Dorsolateral prefrontal cortex (tissue), 120 donors: ENCODE measurements at regions of chr10 and their contacts with region 1.

Region 1: DNA sequence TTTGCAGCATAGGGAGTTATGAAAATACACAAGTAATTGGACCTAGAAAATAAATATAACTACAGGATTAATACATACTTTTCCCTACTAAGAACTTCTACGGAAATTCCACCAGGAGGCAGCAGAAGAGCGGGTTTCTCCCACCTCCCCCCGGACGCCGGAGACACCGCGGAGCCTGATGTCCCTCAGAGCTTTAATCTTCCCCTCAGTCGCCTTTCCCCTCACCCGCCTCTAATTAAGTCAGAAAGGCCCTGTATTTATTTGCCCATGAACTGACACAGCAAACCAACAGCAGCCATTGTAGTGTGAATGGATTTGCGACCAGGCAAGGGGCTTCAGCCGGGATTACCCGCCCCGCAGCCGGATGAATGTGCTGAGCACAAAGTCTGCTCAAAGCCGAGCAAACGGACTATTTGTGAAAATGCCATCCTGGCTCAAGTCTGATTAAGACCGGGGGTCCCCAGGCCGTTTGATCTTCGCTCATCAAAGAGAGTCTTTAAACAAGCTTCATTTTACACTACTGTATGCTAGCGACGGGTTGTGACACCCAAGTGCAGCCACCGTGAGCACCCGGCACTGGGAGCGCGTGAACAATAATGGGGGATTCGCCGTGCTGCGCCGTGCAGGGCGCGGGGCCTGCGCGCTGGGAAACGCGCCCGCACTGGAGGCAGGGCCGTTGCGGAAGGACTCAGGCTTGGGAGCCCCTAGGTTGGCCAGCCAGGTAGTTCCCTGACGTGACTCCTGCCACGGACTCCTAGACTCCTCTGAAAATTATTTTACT is 5.6 kb upstream of the DKK1 start:
- DNase-seq: peak; percentile 23 to 69 (median 55)
- H3K4me3 ChIP-seq: peak overlapping the region; percentile 34 to 87 (median 63)
- H3K27ac ChIP-seq: peak overlapping the region in 8 of 59 donors; percentile 6 to 79 (median 24)
- H3K27me3 ChIP-seq: peaks cover 0 to 12% (median 0%) of the 10 kb centered on the region in 45 donors
- CTCF ChIP-seq: peak; percentile 65 to 91 (median 80)

Region 2: DNA sequence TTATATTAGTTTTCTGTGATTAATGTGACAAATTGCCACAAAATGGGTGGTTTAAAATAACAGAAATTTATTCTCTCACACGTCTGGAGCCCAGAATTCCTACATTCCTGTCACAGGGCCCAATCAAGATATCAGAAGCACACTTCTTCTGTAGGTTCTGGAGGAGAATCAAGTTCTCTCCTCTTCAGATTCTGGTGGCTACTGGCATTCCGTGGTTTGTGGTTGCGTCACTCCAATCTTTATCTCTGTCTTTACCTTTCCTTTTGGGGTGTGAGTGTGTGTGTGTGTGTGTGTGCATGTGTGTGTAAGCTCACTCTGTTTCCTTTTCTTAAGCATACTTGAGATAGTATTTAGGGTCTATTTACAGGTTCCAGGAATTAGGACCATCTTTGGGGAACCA is 109.9 kb before region 1 on chr10:
- intact Hi-C with region 1: no loop called
- DNase-seq: no peak
- H3K4me3 ChIP-seq: no peak overlapping the region
- H3K27ac ChIP-seq: no peak overlapping the region
- H3K27me3 ChIP-seq: no peaks in the 10 kb centered on the region
- CTCF ChIP-seq: no peak

Region 3: GRCh38 chr10:52488606-52489485 is 180.4 kb after region 1 on chr10:
- intact Hi-C with region 1: loop called (anchors 2 to 5 kb)
- DNase-seq: no peak
- H3K4me3 ChIP-seq: no peak overlapping the region
- H3K27ac ChIP-seq: no peak overlapping the region
- H3K27me3 ChIP-seq: no peaks in the 10 kb centered on the region
- CTCF ChIP-seq: peak; percentile 54 to 91 (median 72)

Region 4: DNA sequence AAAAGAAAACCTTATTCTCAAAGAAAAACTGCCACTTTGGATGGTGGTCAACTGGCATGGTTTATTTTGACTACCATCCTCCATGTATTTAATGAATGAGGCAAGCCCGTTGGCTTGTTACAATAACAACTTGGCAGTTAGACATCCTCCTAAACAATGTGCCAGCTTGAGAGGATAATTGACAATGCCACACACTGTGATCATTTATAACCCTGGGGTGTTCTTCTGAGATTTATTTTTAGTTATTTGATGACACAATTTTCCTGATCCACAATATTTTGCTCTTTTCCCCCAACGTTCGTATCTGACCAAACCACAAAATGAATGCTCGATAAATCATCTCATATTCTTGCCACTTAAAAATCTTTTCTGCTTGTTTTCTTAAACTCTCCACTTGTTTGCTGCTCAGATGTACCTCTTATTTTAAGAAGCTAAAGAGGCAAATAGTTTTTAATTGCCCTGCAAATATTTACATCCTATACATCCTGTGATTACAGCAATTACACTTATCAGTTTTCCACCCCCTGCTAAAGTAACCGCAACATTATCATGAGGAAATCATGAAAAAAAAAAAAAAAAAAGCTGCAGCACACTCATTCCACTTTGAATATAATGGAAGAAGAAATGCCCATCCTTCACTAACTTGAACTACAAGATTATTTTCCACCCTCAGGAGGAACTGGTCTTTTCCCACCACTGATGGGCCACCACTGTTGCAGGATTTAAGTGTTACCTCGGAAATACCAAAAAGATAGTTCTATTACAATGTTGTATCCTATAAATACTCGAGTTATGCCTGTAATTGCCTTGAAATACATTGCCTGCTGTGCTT is 344.2 kb after region 1 on chr10:
- intact Hi-C with region 1: loop called (anchors 5 to 10 kb)
- DNase-seq: peak in 1 of 10 donors; percentile 55
- H3K4me3 ChIP-seq: peak overlapping the region in 13 of 59 donors; percentile 0 to 21 (median 9)
- H3K27ac ChIP-seq: peak overlapping the region; percentile 7 to 94 (median 85)
- H3K27me3 ChIP-seq: no peaks in the 10 kb centered on the region
- CTCF ChIP-seq: peak in 12 of 56 donors; percentile 4 to 34 (median 14)